Activated T-helper 1 cell treated with anti-CD3 and anti-CD28 coated beads, Interleukin-12 subunit alpha, Interleukin-12 subunit beta, Interleukin-2, Interleukin-4 antibody, amounts not matched to agents 30 ng/mL and 10 ng/mL and 1 ng/mL, durations not matched to agents 14 hours and 24 hours and 36 hours (primary cell): ENCODE measurements at regions of chr11 and their contacts with region 1.

Region 1: GRCh38 chr11:73625696-73626318 is 20.6 kb upstream of the PLEKHB1 start:
- DNase-seq: peak; percentile 34
- H3K4me3 Mint-ChIP-seq: no peak overlapping the region
- H3K27ac Mint-ChIP-seq: no peak overlapping the region
- H3K4me1 Mint-ChIP-seq: peaks cover 4% of the 10 kb centered on the region
- H3K27me3 Mint-ChIP-seq: peaks cover 30% of the 10 kb centered on the region

Region 2: GRCh38 chr11:73717136-73717535 is 91.3 kb after region 1 on chr11:
- intact Hi-C with region 1: no loop called
- DNase-seq: no peak
- H3K4me3 Mint-ChIP-seq: no peak overlapping the region
- H3K27ac Mint-ChIP-seq: no peak overlapping the region
- H3K4me1 Mint-ChIP-seq: peaks cover 12% of the 10 kb centered on the region
- H3K27me3 Mint-ChIP-seq: no peaks in the 10 kb centered on the region

Region 3: GRCh38 chr11:73931039-73931645 is 305.3 kb after region 1 on chr11:
- intact Hi-C with region 1: loop called (anchors 1 kb)
- DNase-seq: no peak
- H3K4me3 Mint-ChIP-seq: no peak overlapping the region
- H3K27ac Mint-ChIP-seq: no peak overlapping the region
- H3K4me1 Mint-ChIP-seq: no peaks in the 10 kb centered on the region
- H3K27me3 Mint-ChIP-seq: no peaks in the 10 kb centered on the region